ENCODE measurements at regions of chr11 and their contacts with region 1.

Region 1: DNA sequence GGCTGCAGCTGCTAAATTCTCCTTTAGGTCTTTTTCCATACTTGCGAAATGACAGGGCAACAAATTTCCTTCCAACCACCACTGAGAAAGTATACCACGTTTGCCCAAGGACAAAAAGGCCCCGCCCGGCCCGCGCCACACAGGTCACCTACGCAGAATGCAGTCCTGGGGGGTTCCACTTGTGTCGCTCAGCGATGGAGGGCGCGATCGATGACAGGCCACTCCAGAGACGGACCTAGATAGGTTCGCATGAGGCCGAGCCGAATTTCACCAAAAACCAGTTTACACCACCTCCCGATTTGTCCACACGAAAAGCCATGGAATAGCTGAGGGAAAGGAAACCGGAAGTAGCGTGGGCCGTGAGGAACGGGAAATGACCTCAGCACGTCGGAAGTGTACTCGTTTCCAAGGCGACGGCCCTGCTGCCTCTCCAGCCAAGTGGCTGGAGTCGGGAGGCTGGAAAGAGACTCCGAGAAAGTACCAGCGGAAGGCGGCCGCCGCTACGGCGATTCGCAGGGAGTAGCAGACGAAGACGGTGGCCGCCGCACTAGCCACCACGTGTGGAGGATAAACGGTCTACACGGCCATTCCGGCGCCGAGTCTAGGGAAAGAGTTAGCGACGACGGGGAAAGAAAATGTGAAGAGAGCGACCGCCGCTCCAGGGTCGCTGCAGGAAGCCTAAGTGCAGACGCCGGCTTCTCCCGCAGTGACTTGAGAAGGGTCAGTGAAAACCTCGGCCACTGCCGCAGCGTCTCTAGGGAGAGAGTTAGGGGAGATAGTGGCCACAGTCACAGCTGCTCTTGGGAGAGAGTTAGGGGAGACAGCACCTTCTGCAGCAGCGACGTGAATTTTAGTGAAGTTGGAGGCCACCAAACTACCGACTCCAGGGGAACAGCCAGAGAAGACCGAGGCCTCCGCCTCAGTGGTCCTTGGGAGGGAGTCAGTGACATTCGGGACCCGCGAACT is at the start of gene ANKRD42:
- DNase-seq: peak; percentile 90 to 96 (median 96)
- H3K4me3 ChIP-seq: peak within 1 kb of the TSS; percentile 82 to 99 (median 85)
- H3K4me3 Mint-ChIP-seq: peak within 1 kb of the TSS; percentile 97 to 99
- H3K27ac ChIP-seq: peak within 1 kb of the TSS; percentile 93 to 96
- H3K27ac Mint-ChIP-seq: peak within 1 kb of the TSS; percentile 97 to 100 (median 99)
- H3K4me1 ChIP-seq: peaks cover 23 to 27% of the 10 kb centered on the region in 2 donors
- H3K4me1 Mint-ChIP-seq: peaks cover 31% of the 10 kb centered on the region
- H3K27me3 ChIP-seq: no peaks in the 10 kb centered on the region
- H3K27me3 Mint-ChIP-seq: no peaks in the 10 kb centered on the region
- CTCF ChIP-seq: no peak
- polyA plus RNA-seq, gene ANKRD42: 4.3 to 6.2 (median 6.1) TPM

Region 2: GRCh38 chr11:82601711-82602110 is 591.9 kb before region 1 on chr11:
- intact Hi-C with region 1: no loop called
- DNase-seq: no peak
- H3K4me3 ChIP-seq: no peak overlapping the region
- H3K4me3 Mint-ChIP-seq: no peak overlapping the region
- H3K27ac ChIP-seq: no peak overlapping the region
- H3K27ac Mint-ChIP-seq: no peak overlapping the region
- H3K4me1 ChIP-seq: no peaks in the 10 kb centered on the region
- H3K4me1 Mint-ChIP-seq: no peaks in the 10 kb centered on the region
- H3K27me3 ChIP-seq: no peaks in the 10 kb centered on the region
- H3K27me3 Mint-ChIP-seq: peaks cover 0 to 3% (median 3%) of the 10 kb centered on the region in 3 donors
- CTCF ChIP-seq: no peak

Region 3: DNA sequence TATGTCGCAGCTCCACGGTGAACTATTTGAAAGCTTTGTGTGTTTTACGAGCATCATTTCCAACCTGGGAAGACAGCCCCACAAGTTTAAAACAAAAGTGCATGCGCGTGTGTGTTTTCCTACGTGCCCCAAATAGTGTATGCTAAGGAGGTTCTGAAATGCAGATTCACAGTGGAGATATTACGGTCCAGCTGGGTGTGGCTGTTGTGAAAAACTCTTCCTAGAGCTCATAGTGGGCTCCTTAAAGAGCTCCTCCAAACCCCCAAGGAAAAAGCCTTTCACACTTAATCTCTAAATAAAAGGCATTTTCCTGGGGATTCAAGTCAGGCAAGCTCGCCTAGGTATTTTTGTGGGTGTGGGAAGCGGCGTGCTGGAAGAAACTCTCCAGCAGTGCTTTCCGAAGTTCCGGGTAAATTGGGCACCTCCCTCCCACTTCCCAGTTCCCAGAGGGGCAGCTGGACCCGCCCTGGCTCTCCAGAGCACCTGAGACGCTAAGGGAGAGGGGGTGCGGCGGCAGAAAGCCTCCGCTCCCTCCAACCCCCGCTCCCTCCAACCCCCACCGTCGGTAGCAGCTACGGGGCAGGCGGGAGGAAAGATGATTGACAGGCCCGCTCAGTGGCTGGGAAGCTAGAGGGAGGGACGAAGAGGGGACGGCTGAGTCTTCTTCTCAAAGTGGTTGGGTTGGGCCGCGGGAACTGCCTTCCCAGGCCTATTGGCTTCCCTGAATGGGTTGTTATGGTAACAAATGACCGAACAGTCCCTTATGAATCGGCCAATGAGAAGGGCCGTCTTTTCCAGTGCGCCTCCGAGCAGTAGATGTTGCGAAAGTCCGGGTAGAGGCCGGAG is 37.2 kb before region 1 on chr11:
- intact Hi-C with region 1: loop called (anchors 1 to 2 kb)
- DNase-seq: peak; percentile 100
- H3K4me3 ChIP-seq: peak overlapping the region; percentile 77 to 98 (median 91)
- H3K4me3 Mint-ChIP-seq: peak overlapping the region; percentile 98 to 99
- H3K27ac ChIP-seq: peak overlapping the region; percentile 95 to 97
- H3K27ac Mint-ChIP-seq: peak overlapping the region; percentile 90 to 100 (median 100)
- H3K4me1 ChIP-seq: peaks cover 25 to 40% of the 10 kb centered on the region in 2 donors
- H3K4me1 Mint-ChIP-seq: peaks cover 24% of the 10 kb centered on the region
- H3K27me3 ChIP-seq: no peaks in the 10 kb centered on the region
- H3K27me3 Mint-ChIP-seq: peaks cover 0 to 4% (median 0%) of the 10 kb centered on the region in 3 donors
- CTCF ChIP-seq: no peak

Measured in CD14-positive monocyte (primary cell).